ENCODE measurements at regions of chr19 and their contacts with region 1.

Region 1: DNA sequence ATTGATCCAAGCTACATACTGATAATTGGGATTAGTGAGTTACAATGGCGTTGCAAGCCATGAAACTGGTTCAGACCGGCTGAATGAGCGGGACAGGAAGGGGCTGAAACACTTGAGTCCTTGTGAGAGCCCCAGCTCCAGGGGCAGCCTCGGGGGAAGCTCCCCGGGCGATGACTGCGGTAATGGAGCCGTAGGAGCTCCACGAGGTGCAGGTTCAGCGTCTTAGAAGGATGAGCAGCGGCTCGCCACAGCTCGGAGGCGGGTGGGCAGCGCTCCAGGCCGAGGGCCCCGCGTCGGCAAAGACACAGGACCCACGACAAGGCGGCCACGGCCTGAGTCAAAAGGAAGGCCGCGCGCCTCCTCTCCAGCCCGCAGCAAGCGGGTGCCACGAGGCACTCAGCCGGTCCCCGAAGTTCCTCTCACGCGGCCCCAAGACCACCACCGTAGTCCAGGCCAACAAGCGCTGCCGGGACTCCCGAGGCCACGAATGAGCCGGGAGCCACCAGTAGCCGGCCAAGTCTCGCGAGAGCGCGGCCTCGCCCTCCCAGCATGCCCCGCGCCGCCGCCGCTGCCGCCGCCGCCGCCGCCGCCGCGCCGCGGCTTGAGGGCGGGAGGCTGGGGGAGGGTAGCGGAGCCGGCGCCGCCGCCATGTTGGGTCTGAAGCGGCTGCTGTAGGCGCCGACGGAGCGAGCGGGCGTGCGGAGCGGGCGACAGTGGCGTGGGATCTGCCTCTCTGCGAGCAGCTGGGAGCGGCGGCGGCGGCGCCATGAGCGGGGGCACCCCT is at the start of gene LSM14A:
- DNase-seq: peak; percentile 93
- H3K4me3 ChIP-seq: peak within 1 kb of the TSS; percentile 88
- H3K27ac ChIP-seq: peak within 1 kb of the TSS; percentile 91
- H3K4me1 ChIP-seq: peaks cover 50% of the 10 kb centered on the region
- CTCF ChIP-seq: no peak
- total RNA-seq, gene LSM14A: 151 and 182 TPM in 2 replicates

Region 2: DNA sequence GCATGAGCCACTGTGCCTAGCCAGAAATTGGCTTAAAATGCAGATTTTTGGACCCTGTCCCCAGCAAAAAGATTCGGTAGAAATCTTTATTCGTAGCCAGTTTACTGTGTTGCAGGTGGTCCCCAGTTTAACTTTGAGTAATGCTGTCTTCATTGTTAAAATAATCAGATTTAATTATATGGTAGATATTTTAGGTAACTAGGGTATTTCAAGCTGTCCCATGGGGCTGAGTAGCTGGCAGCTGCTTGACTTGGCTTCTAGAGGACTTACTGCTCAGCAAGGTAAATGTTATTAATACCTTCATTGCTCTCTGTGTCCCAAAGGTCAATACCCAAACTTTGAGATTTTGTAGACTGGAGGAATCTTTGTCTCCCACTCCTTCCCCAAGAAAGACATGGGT is 21.4 kb after region 1 on chr19:
- CTCF ChIA-PET with region 1: no interaction called
- POLR2A ChIA-PET with region 1: interaction called, 26 read pairs
- intact Hi-C with region 1: no loop called
- DNase-seq: peak; percentile 83
- H3K4me3 ChIP-seq: peak overlapping the region; percentile 51
- H3K27ac ChIP-seq: peak overlapping the region; percentile 90
- H3K4me1 ChIP-seq: peaks cover 65% of the 10 kb centered on the region
- CTCF ChIP-seq: no peak

Region 3: GRCh38 chr19:34220472-34221063 is 48.5 kb after region 1 on chr19:
- CTCF ChIA-PET with region 1: no interaction called
- POLR2A ChIA-PET with region 1: interaction called, 3 read pairs
- intact Hi-C with region 1: loop called (anchors 1 kb)
- DNase-seq: peak; percentile 73
- H3K4me3 ChIP-seq: no peak overlapping the region
- H3K27ac ChIP-seq: no peak overlapping the region
- H3K4me1 ChIP-seq: no peaks in the 10 kb centered on the region
- CTCF ChIP-seq: peak; percentile 97